ENCODE measurements at regions of chr1 and their contacts with region 1.

Region 1: GRCh38 chr1:199684686-199685273 is 342.7 kb upstream of the NR5A2 start:
- DNase-seq: peak; percentile 82
- ATAC-seq: peak; percentile 91
- H3K4me3 ChIP-seq: no peak overlapping the region
- H3K27ac ChIP-seq: no peak overlapping the region
- H3K4me1 ChIP-seq: peaks cover 4% of the 10 kb centered on the region
- H3K27me3 ChIP-seq: no peaks in the 10 kb centered on the region
- CTCF ChIP-seq: peak; percentile 84
- POLR2A ChIP-seq: no peak
- RAD21 ChIP-seq: peak; percentile 93

Region 2: GRCh38 chr1:199243423-199244061 is 441.2 kb before region 1 on chr1:
- CTCF ChIA-PET with region 1: no interaction called
- POLR2A ChIA-PET with region 1: no interaction called
- dilution Hi-C with region 1: no loop called
- in situ Hi-C with region 1: no loop called
- intact Hi-C with region 1: no loop called
- DNase-seq: peak; percentile 43
- ATAC-seq: peak; percentile 85
- H3K4me3 ChIP-seq: no peak overlapping the region
- H3K27ac ChIP-seq: no peak overlapping the region
- H3K4me1 ChIP-seq: no peaks in the 10 kb centered on the region
- H3K27me3 ChIP-seq: no peaks in the 10 kb centered on the region
- CTCF ChIP-seq: peak; percentile 64
- POLR2A ChIP-seq: no peak
- RAD21 ChIP-seq: peak; percentile 79

Region 3: GRCh38 chr1:200038981-200039848 is 354.4 kb after region 1 on chr1:
- CTCF ChIA-PET with region 1: no interaction called
- POLR2A ChIA-PET with region 1: no interaction called
- dilution Hi-C with region 1: no loop called
- in situ Hi-C with region 1: no loop called
- intact Hi-C with region 1: loop called (anchors 5 kb)
- DNase-seq: no peak
- ATAC-seq: peak; percentile 67
- H3K4me3 ChIP-seq: peak overlapping the region; percentile 44
- H3K27ac ChIP-seq: no peak overlapping the region; the same call in 1 of the 2 replicates
- H3K4me1 ChIP-seq: peaks cover 6% of the 10 kb centered on the region
- H3K27me3 ChIP-seq: peaks cover 88% of the 10 kb centered on the region
- CTCF ChIP-seq: no peak
- POLR2A ChIP-seq: no peak
- RAD21 ChIP-seq: no peak

Region 4: GRCh38 chr1:200279810-200280411 is 595.1 kb after region 1 on chr1:
- CTCF ChIA-PET with region 1: interaction called, 8 read pairs
- POLR2A ChIA-PET with region 1: no interaction called
- dilution Hi-C with region 1: no loop called
- in situ Hi-C with region 1: loop called (anchors 10 kb)
- intact Hi-C with region 1: loop called (anchors 2 kb)
- DNase-seq: peak; percentile 60
- ATAC-seq: peak; percentile 88
- H3K4me3 ChIP-seq: no peak overlapping the region
- H3K27ac ChIP-seq: no peak overlapping the region
- H3K4me1 ChIP-seq: peaks cover 3% of the 10 kb centered on the region
- H3K27me3 ChIP-seq: no peaks in the 10 kb centered on the region
- CTCF ChIP-seq: peak; percentile 73
- POLR2A ChIP-seq: 0 out of 2 replicates have a peak, but pooled peaks have one; percentile 30
- RAD21 ChIP-seq: peak; percentile 80

Region 5: GRCh38 chr1:200409761-200410565 is 725.2 kb after region 1 on chr1 and contains the start of gene ZNF281:
- CTCF ChIA-PET with region 1: no interaction called
- POLR2A ChIA-PET with region 1: no interaction called
- dilution Hi-C with region 1: no loop called
- in situ Hi-C with region 1: no loop called
- intact Hi-C with region 1: loop called (anchors 10 kb)
- DNase-seq: peak; percentile 90
- ATAC-seq: peak; percentile 98
- H3K4me3 ChIP-seq: peak within 1 kb of the TSS; percentile 86
- H3K27ac ChIP-seq: peak within 1 kb of the TSS; percentile 98
- H3K4me1 ChIP-seq: peaks cover 13% of the 10 kb centered on the region
- H3K27me3 ChIP-seq: no peaks in the 10 kb centered on the region
- CTCF ChIP-seq: no peak
- POLR2A ChIP-seq: peak; percentile 80
- RAD21 ChIP-seq: no peak
- total RNA-seq, gene ZNF281: 37.5 and 38.0 TPM in 2 replicates

Region 6: GRCh38 chr1:200510228-200510623 is 825.4 kb after region 1 on chr1:
- CTCF ChIA-PET with region 1: interaction called, 17 read pairs
- POLR2A ChIA-PET with region 1: no interaction called
- dilution Hi-C with region 1: no loop called
- in situ Hi-C with region 1: loop called (anchors 5 kb)
- intact Hi-C with region 1: loop called (anchors 1 kb)
- DNase-seq: peak; percentile 88
- ATAC-seq: peak; percentile 90
- H3K4me3 ChIP-seq: no peak overlapping the region
- H3K27ac ChIP-seq: no peak overlapping the region
- H3K4me1 ChIP-seq: no peaks in the 10 kb centered on the region
- H3K27me3 ChIP-seq: no peaks in the 10 kb centered on the region
- CTCF ChIP-seq: peak; percentile 91
- POLR2A ChIP-seq: peak; percentile 56; the same call in 1 of the 2 replicates
- RAD21 ChIP-seq: peak; percentile 94